Ovary (tissue), 10 donors: ENCODE measurements at regions of chr1 and their contacts with region 1.

Region 1: DNA sequence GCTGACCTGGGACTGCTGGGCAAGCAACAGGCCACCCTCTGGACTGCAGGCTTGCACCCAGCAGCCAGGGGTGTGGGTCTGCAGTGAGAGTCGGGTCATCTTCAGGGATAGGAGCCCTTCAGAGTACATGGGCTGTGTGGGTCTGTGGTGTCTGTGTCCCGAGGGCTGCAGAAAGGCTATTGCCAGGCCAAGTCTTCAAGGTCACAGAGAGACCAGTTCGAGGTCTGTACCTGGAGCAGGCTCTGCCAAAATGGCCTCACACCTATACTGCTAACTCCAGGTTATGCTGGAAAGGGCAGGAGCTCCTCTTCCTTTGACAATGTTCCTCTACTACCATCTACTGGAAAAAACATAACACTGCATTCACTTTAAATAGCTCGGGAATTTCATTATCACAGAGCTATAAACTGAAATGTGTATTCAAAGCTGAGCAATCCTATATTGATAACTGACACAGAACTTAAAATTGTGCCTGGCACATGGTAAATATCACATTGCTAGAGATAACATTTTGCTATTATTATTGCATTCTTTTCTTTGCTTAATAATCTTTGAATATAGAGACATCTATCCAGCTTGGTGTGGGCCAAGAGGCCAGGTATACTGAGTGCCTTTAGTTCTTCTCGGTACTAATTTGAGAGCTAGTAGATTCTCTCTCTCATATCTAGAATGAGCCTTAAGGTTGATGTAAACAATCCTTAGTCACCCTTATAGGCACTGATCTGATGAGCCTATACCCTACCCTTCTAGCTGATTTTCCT is 6.9 kb upstream of the DNAH14 start:
- DNase-seq: peak in 1 of 5 donors; percentile 21
- H3K4me3 ChIP-seq: no peak overlapping the region
- H3K27ac ChIP-seq: no peak overlapping the region
- H3K4me1 ChIP-seq: no peaks in the 10 kb centered on the region
- H3K27me3 ChIP-seq: no peaks in the 10 kb centered on the region
- CTCF ChIP-seq: peak; percentile 39 to 66 (median 40)
- EP300 ChIP-seq: no peak
- POLR2A ChIP-seq: no peak

Region 2: GRCh38 chr1:224513787-224514209 is 408.8 kb before region 1 on chr1:
- intact Hi-C with region 1: loop called in 2 of 4 experiments (anchors 5 kb)
- DNase-seq: peak; percentile 74 to 89 (median 84)
- H3K4me3 ChIP-seq: no peak overlapping the region
- H3K27ac ChIP-seq: no peak overlapping the region
- H3K4me1 ChIP-seq: no peaks in the 10 kb centered on the region
- H3K27me3 ChIP-seq: no peaks in the 10 kb centered on the region
- CTCF ChIP-seq: peak; percentile 59 to 89 (median 79)
- EP300 ChIP-seq: no peak
- POLR2A ChIP-seq: no peak

Region 3: DNA sequence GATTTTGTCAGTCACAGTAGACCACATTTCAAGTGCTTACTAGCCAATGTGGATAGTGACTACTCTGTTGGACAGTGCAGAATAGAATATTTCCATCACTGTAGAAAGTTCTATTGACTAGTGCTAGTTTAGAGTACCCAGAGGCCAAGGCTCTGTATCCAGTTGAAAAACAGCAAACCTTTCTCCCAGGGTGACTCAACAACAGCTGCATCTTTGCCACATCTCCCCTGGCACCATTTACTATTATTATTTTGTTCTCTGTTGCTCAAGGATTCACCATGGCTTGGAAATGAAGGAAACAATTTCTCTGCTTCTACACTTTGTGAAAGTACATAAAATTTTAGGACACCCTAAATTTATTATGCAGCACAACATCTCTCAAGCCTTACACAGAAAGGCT is 402.7 kb before region 1 on chr1:
- intact Hi-C with region 1: loop called in 1 of 4 experiments (anchors 5 kb)
- DNase-seq: no peak
- H3K4me3 ChIP-seq: no peak overlapping the region
- H3K27ac ChIP-seq: no peak overlapping the region
- H3K4me1 ChIP-seq: no peaks in the 10 kb centered on the region
- H3K27me3 ChIP-seq: no peaks in the 10 kb centered on the region
- CTCF ChIP-seq: no peak
- EP300 ChIP-seq: no peak
- POLR2A ChIP-seq: no peak

Region 4: DNA sequence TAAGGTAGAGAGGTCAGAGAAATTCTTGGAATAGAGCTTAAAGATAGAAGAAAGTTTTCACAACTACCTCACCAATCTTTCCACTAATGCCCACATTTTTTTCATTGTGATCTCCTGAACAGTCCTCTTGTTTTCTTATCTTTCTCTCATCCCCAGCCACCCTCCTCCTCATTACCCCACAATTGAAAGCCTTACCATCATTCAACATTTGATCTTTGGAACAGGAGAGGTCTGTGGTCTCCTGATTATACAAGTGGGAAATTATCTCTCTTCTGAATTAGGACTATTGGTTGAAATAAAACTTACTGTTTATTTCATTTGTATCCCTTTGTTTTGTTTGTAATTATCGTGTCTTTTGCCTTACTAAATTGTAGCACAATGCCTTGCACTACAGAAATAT is 36.5 kb after region 1 on chr1:
- intact Hi-C with region 1: no loop called
- DNase-seq: no peak
- H3K4me3 ChIP-seq: no peak overlapping the region
- H3K27ac ChIP-seq: no peak overlapping the region
- H3K4me1 ChIP-seq: no peaks in the 10 kb centered on the region
- H3K27me3 ChIP-seq: no peaks in the 10 kb centered on the region
- CTCF ChIP-seq: no peak
- EP300 ChIP-seq: no peak
- POLR2A ChIP-seq: no peak

Region 5: GRCh38 chr1:225290244-225290643 is 367.7 kb after region 1 on chr1:
- intact Hi-C with region 1: no loop called
- DNase-seq: no peak
- H3K4me3 ChIP-seq: no peak overlapping the region
- H3K27ac ChIP-seq: no peak overlapping the region
- H3K4me1 ChIP-seq: no peaks in the 10 kb centered on the region
- H3K27me3 ChIP-seq: no peaks in the 10 kb centered on the region
- CTCF ChIP-seq: no peak
- EP300 ChIP-seq: no peak
- POLR2A ChIP-seq: no peak

Region 6: DNA sequence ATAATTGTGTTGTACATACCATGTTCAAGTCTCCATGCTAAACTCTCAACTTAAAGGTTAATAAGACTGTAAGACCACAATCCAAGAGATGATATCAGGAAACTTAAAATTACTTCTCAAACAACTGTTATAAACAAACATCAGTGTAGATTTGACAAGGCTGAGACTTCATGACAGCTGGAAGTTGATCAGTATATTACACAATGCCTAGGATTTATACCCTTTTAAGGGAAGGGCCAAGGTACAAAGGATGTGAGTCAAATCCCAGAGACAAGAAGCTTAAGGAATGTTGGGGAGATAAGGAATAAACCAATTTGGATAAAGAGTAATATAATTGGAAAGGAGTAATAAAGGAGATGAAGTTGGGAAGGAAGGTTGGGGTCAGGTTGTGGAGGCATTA is 406.5 kb after region 1 on chr1:
- intact Hi-C with region 1: no loop called
- DNase-seq: no peak
- H3K4me3 ChIP-seq: no peak overlapping the region
- H3K27ac ChIP-seq: no peak overlapping the region
- H3K4me1 ChIP-seq: no peaks in the 10 kb centered on the region
- H3K27me3 ChIP-seq: no peaks in the 10 kb centered on the region
- CTCF ChIP-seq: no peak
- EP300 ChIP-seq: no peak
- POLR2A ChIP-seq: no peak